Gastrocnemius medialis (tissue), 4 donors: ENCODE measurements at regions of chr18 and their contacts with region 1.

Region 1: GRCh38 chr18:49486953-49487710 is at the start of gene C18orf32:
- DNase-seq: peak; percentile 92 to 95
- ATAC-seq: peak; percentile 96
- H3K4me3 ChIP-seq: peak within 1 kb of the TSS; percentile 82 to 93 (median 90)
- H3K27ac ChIP-seq: peak within 1 kb of the TSS; percentile 94 to 98 (median 98)
- H3K4me1 ChIP-seq: peaks cover 38 to 40% of the 10 kb centered on the region in 2 donors
- H3K27me3 ChIP-seq: no peaks in the 10 kb centered on the region
- CTCF ChIP-seq: no peak
- POLR2A ChIP-seq: peak; percentile 97 to 99
- total RNA-seq, gene C18orf32: 14.0 to 28.2 (median 19.6) TPM

Region 2: GRCh38 chr18:47930931-47931717 is 1556.0 kb before region 1 on chr18:
- in situ Hi-C with region 1: no loop called
- intact Hi-C with region 1: loop called (anchors 10 kb)
- DNase-seq: peak; percentile 97
- ATAC-seq: peak; percentile 88
- H3K4me3 ChIP-seq: peak overlapping the region; percentile 60 to 84 (median 82)
- H3K27ac ChIP-seq: peak overlapping the region; percentile 92 to 97 (median 94)
- H3K4me1 ChIP-seq: peaks cover 32 to 38% of the 10 kb centered on the region in 2 donors
- H3K27me3 ChIP-seq: no peaks in the 10 kb centered on the region
- CTCF ChIP-seq: peak in 1 of 5 experiments; percentile 9
- POLR2A ChIP-seq: peak; percentile 86 to 91

Region 3: DNA sequence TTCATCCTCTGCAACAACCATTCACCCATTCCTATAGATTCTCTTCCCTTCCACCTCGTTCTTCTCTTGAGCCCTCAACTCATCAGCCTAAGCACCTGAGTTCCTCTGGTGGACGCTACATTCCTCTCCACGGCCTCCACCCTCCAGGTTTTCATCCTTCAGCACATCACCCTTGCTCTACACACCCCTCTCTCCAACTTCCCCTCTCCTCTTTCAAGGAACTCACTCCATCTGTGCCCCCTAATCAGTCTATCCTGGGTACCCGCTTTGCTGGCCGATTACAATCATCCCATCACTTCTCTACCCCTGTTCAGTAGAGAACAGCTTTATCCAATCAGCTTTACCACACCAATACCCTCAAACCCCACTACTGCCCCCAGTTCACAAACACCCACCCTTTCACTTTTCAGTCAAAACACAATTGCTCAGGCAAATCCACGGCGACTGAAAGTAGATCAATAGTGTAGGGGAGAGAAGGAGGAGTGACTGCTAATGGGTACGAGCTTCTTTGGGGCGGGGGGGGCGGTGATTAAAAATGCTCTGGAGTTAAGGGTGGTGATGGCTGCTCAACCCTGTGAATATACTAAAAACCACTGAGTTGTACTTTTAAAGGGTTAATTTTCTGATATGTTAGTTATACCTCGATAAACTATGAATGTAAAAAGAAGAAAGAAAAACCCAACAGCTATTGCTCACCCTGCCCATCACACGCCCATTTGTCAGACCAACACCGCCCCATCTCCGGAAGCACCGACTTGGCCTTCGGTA is 27.5 kb before region 1 on chr18:
- in situ Hi-C with region 1: no loop called
- intact Hi-C with region 1: loop called (anchors 1 kb)
- DNase-seq: peak in 1 of 2 donors; percentile 13
- ATAC-seq: peak; percentile 25 to 46
- H3K4me3 ChIP-seq: peak overlapping the region; percentile 89 to 100 (median 92)
- H3K27ac ChIP-seq: peak overlapping the region; percentile 84 to 98 (median 93)
- H3K4me1 ChIP-seq: peaks cover 14 to 20% of the 10 kb centered on the region in 2 donors
- H3K27me3 ChIP-seq: no peaks in the 10 kb centered on the region
- CTCF ChIP-seq: no peak
- POLR2A ChIP-seq: no peak

Region 4: GRCh38 chr18:49819823-49820671 is 332.9 kb after region 1 on chr18:
- in situ Hi-C with region 1: loop called in 1 of 4 experiments (anchors 5 kb)
- intact Hi-C with region 1: loop called (anchors 2 kb)
- DNase-seq: no peak
- ATAC-seq: no peak
- H3K4me3 ChIP-seq: no peak overlapping the region
- H3K27ac ChIP-seq: no peak overlapping the region
- H3K4me1 ChIP-seq: peaks cover 0 to 4% of the 10 kb centered on the region in 2 donors
- H3K27me3 ChIP-seq: no peaks in the 10 kb centered on the region
- CTCF ChIP-seq: no peak
- POLR2A ChIP-seq: no peak

Region 5: GRCh38 chr18:50287441-50288347 is 800.6 kb after region 1 on chr18 and contains the start of gene CXXC1:
- in situ Hi-C with region 1: loop called in 3 of 4 experiments (anchors 25 kb)
- intact Hi-C with region 1: loop called (anchors 5 kb)
- DNase-seq: peak; percentile 95
- ATAC-seq: peak; percentile 98
- H3K4me3 ChIP-seq: peak within 1 kb of the TSS; percentile 73 to 97 (median 84)
- H3K27ac ChIP-seq: peak within 1 kb of the TSS; percentile 82 to 93 (median 91)
- H3K4me1 ChIP-seq: no peaks in the 10 kb centered on the region
- H3K27me3 ChIP-seq: no peaks in the 10 kb centered on the region
- CTCF ChIP-seq: peak; percentile 46 to 75 (median 61)
- POLR2A ChIP-seq: peak in 1 of 2 donors; percentile 46
- total RNA-seq, gene CXXC1: 21.1 to 32.0 (median 27.3) TPM